Ascending aorta (tissue), 2 donors: ENCODE measurements at regions of chr1 and their contacts with region 1.

Region 1: DNA sequence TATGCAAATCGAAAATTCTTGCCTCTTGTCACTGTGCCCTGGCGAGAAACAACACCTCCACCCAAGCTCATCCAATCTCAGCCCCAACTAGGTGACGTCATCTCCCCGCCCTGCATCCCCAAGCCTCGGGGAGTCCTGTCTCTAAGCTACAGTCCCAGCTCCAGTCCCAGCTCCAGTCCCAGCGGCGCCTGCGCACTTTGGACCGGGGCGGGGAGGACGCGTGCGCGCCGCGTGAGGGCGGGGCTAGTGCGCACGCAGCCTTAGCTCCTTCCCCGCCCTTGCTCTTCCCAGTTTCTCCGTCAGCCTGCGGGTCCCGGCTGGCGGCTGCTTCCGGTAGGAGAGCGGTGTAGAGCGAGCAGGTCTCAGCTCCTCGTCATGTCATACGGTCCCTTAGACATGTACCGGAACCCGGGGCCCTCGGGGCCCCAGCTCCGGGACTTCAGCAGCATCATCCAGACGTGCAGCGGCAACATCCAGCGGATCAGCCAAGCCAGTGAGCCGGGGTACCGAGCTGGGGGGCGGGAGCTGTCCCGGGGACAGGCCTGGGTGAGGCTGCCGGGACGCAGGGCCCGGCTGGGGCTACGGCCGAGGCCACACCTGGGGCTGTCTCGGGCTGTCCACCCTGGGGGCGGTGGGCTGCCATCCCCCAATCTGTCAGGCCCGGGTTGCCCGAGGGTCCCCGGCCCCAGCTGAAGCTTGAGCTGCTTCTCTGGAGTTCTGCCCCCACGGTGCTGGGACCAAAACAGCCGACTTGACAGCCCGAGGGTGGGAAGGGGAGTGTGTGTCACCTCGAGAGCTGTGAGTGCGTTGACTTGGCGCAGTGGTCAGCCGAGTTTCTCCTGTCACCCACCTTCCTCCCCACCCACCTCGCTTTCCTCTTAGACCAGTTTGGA is at the start of gene STX12:
- DNase-seq: peak; percentile 99 to 100
- H3K4me3 ChIP-seq: peak within 1 kb of the TSS; percentile 75 to 91
- H3K27ac ChIP-seq: peak within 1 kb of the TSS; percentile 96 to 98
- H3K4me1 ChIP-seq: peaks cover 0 to 24% of the 10 kb centered on the region in 2 donors
- H3K27me3 ChIP-seq: no peaks in the 10 kb centered on the region
- CTCF ChIP-seq: no peak
- total RNA-seq, gene STX12: 91.9 TPM

Region 2: DNA sequence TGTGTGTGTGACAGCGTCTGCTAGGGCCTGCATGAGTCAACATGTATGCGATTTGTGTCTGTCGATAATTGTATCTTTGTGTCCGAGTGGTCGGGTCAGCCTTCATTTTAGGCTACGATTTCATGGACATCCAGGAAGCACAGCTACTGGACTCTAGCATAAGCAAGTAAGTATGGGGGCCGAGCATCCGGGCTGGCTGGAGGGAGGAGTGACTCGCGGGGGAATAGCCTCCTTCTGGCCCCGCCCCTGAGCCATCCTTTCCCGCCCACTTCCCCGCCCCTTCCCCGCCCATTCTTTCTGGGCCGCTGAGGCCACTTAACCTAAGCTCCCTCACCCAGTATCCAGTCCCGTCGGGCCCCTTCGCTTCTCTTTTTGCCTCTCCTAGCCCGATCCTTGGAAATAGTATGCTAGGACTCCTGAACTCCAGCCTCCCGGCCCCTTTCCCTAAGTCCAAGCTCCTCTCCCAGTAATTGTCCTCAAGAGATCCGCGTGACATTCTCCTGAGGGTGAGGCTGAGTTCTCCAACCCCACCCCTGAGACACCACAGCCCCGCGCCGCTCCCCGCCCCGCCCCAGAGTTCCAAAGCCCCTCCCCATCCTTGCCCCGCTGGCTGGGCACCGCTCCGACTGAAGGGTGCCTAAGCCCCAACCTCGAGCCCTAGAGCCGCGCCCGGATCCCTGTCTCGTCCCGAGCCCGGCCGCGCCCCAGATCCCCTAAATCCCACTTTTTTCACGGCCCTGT is 407.6 kb before region 1 on chr1:
- intact Hi-C with region 1: loop called (anchors 2 kb)
- DNase-seq: peak; percentile 66 to 95
- H3K4me3 ChIP-seq: peak overlapping the region; percentile 70 to 96
- H3K27ac ChIP-seq: peak overlapping the region; percentile 97 to 99
- H3K4me1 ChIP-seq: peaks cover 21 to 23% of the 10 kb centered on the region in 2 donors
- H3K27me3 ChIP-seq: no peaks in the 10 kb centered on the region
- CTCF ChIP-seq: no peak

Region 3: DNA sequence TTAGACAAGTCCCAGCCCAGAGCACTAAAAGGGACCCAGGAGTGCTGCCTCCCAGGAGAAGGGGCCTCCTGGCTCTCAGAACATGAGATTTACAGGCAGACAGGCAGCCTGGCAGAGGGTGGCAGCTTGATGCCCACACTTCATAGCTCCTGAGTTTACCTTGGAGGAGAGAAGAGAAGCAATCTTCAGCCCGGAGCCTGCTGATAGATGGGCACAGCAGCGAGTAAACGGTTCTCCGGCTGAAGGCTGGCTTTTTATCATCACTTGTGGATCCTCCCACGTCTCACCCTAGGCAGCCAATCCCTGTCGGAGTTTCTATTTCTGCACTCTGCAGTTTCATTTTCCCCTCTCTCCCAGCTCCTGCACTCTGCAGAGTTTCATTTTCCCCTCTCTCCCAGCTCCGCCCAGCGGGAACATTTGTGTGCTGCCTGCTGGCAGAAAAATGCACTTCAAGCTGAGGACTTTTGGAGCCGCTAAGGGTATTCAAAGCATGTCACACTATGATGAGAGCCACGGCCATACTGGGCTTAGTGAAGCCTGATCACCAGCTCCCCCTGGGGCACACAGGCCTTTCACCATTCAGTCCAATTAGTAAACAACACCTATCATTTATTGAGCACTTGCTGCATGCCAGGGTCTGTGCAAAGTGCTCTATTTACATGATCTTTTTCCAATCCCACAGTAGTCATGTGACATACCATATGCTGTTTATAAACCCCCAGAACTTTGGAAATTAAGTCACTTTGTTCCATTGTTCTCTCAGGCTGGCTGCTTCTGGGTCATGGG is 101.0 kb before region 1 on chr1 and contains the start of gene IFI6:
- intact Hi-C with region 1: loop called (anchors 5 kb)
- DNase-seq: peak; percentile 69 to 94
- H3K4me3 ChIP-seq: peak within 1 kb of the TSS; percentile 49 to 68
- H3K27ac ChIP-seq: peak within 1 kb of the TSS; percentile 84 to 91
- H3K4me1 ChIP-seq: peaks cover 0 to 17% of the 10 kb centered on the region in 2 donors
- H3K27me3 ChIP-seq: no peaks in the 10 kb centered on the region
- CTCF ChIP-seq: peak; percentile 38 to 47 (median 39)
- total RNA-seq, gene IFI6: 238 TPM

Region 4: GRCh38 chr1:27725374-27726173 is 47.6 kb before region 1 on chr1 and contains the start of gene FAM76A:
- intact Hi-C with region 1: loop called (anchors 1 kb)
- DNase-seq: peak; percentile 97 to 100
- H3K4me3 ChIP-seq: peak within 1 kb of the TSS; percentile 68 to 98
- H3K27ac ChIP-seq: peak within 1 kb of the TSS; percentile 83 to 96
- H3K4me1 ChIP-seq: peaks cover 10 to 12% of the 10 kb centered on the region in 2 donors
- H3K27me3 ChIP-seq: no peaks in the 10 kb centered on the region
- CTCF ChIP-seq: peak; percentile 30 to 58 (median 48)
- total RNA-seq, gene FAM76A: 3.4 TPM

Region 5: GRCh38 chr1:27830621-27831424 is 57.6 kb after region 1 on chr1 and contains the start of gene PPP1R8:
- intact Hi-C with region 1: loop called (anchors 1 kb)
- DNase-seq: peak; percentile 73 to 95
- H3K4me3 ChIP-seq: peak within 1 kb of the TSS; percentile 82 to 93
- H3K27ac ChIP-seq: peak within 1 kb of the TSS; percentile 79 to 82
- H3K4me1 ChIP-seq: peaks cover 3 to 11% of the 10 kb centered on the region in 2 donors
- H3K27me3 ChIP-seq: no peaks in the 10 kb centered on the region
- CTCF ChIP-seq: no peak
- total RNA-seq, gene PPP1R8: 7.1 TPM

Region 6: DNA sequence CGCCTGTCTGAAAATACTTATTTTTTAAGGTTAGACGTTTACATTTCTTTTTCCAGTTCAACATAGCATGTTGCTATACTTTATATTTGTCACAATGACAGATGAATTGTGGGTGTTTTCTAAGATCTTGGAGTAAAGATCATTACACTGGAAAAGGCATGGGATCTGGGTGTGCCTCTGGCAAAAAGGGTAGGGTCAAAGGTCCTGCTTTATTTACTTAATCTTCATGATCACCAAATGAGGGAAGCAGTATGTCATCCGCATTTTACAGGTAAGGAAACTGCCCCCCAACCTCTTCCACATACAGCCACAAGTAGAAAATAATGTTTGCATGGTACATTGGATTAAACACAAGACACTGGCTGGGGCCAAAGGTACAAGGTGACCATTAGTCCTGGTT is 149.1 kb after region 1 on chr1:
- intact Hi-C with region 1: no loop called
- DNase-seq: no peak
- H3K4me3 ChIP-seq: no peak overlapping the region
- H3K27ac ChIP-seq: no peak overlapping the region
- H3K4me1 ChIP-seq: no peaks in the 10 kb centered on the region
- H3K27me3 ChIP-seq: no peaks in the 10 kb centered on the region
- CTCF ChIP-seq: no peak

Region 7: DNA sequence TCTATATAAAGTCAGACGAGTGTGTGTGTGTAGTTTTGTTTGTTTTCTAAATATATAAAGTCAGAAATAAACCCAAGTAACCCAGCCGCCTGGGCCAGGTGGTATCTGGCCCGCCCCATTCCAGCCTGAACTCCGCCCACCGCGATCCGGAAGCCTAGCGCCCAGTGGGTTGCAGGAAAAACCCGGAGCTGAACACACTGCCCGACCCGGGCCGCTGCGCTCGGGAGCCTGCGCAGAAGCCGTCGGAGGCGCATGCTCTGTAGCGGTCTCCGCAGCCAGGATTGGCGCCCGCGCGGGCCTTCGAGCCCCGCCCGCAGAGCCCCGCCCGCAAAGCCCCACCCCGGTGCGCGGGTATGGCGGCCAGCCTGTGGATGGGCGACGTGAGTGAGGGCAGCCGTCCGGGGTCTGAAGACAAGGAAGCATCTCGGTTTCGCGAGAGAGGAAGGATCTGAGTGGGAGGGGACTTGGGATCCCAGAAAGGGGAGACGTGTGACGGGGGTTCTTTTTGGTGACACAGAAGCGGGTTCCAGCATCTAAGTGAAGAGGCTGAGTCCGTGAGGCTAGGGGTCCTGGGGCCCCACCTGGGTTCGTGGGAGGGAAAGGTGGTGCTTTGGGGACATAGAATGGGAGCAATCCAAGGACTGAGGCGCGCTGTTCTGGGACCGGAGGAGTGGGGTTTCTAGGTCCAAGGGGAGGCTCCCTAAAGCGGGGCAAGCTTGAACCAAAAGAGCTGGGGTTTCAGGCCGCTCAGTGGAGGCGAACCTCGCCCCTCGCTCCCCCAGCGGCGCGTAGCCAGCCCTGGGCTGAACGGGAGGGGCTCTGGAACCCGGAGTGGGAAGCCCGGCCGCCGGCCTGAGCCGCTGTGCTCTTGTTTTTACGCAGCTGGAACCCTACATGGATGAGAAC is 779.8 kb after region 1 on chr1 and contains the start of gene TRNAU1AP:
- intact Hi-C with region 1: loop called (anchors 2 kb)
- DNase-seq: peak; percentile 83 to 97
- H3K4me3 ChIP-seq: peak within 1 kb of the TSS; percentile 64 to 90
- H3K27ac ChIP-seq: peak within 1 kb of the TSS; percentile 77 to 85
- H3K4me1 ChIP-seq: peaks cover 0 to 10% of the 10 kb centered on the region in 2 donors
- H3K27me3 ChIP-seq: no peaks in the 10 kb centered on the region
- CTCF ChIP-seq: no peak
- total RNA-seq, gene TRNAU1AP: 11.0 TPM